ENCODE measurements at regions of chr3 and their contacts with region 1.

Region 1: GRCh38 chr3:10192953-10193691 is 28.4 kb downstream of the IRAK2 start:
- DNase-seq: peak; percentile 41 to 55
- ATAC-seq: peak in 1 of 2 donors; percentile 12
- H3K4me3 ChIP-seq: no peak overlapping the region
- H3K27ac ChIP-seq: peak overlapping the region; percentile 91 to 99 (median 96)
- H3K4me1 ChIP-seq: peaks cover 75 to 89% of the 10 kb centered on the region in 2 donors
- H3K27me3 ChIP-seq: no peaks in the 10 kb centered on the region
- CTCF ChIP-seq: peak in 3 of 5 experiments; percentile 25 to 40 (median 35)
- POLR2A ChIP-seq: no peak

Region 2: DNA sequence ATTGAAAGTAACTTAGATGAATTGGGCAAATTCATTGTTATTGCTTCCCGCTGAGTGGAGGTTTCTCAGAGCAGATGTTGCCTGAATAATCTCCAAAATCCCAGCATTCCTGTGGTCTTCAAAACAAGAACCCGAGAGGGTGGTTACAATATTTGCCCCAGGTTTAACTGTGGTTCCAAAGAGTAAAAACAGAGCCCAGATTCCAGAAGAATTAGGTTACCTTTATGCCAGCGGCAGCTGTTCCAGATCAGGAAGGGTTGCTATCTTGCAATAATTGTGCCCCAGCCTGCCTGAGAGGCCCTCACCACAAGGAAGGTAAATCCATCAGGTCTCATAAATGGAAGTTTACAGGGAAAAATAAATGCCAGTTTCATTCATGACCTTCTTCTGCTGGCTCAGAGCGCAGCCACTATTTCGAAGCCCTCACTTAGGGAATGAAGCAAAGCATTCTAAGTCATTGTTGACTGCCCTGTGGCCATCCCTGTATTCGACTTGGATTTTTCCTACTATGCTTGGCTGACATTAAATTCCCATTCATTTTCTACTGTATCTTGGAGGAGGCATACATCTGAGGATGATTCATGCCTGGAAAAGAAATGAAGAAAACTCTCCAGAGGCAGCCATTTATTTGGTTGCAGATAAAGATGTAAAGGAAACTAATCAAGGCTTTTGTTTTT is 1603.1 kb before region 1 on chr3:
- in situ Hi-C with region 1: no loop called
- intact Hi-C with region 1: loop called (anchors 10 kb)
- DNase-seq: no peak
- ATAC-seq: no peak
- H3K4me3 ChIP-seq: no peak overlapping the region
- H3K27ac ChIP-seq: peak overlapping the region; percentile 86 to 94 (median 88)
- H3K4me1 ChIP-seq: peaks cover 62 to 65% of the 10 kb centered on the region in 2 donors
- H3K27me3 ChIP-seq: no peaks in the 10 kb centered on the region
- CTCF ChIP-seq: no peak
- POLR2A ChIP-seq: no peak

Region 3: GRCh38 chr3:9976721-9977709 is 216.1 kb before region 1 on chr3:
- in situ Hi-C with region 1: no loop called
- intact Hi-C with region 1: loop called (anchors 5 kb)
- DNase-seq: peak; percentile 83 to 93
- ATAC-seq: peak; percentile 98 to 99
- H3K4me3 ChIP-seq: peak overlapping the region; percentile 23 to 56 (median 50)
- H3K27ac ChIP-seq: peak overlapping the region; percentile 89 to 96 (median 90)
- H3K4me1 ChIP-seq: peaks cover 36 to 54% of the 10 kb centered on the region in 2 donors
- H3K27me3 ChIP-seq: no peaks in the 10 kb centered on the region
- CTCF ChIP-seq: no peak
- POLR2A ChIP-seq: peak; percentile 36 to 37

Region 4: DNA sequence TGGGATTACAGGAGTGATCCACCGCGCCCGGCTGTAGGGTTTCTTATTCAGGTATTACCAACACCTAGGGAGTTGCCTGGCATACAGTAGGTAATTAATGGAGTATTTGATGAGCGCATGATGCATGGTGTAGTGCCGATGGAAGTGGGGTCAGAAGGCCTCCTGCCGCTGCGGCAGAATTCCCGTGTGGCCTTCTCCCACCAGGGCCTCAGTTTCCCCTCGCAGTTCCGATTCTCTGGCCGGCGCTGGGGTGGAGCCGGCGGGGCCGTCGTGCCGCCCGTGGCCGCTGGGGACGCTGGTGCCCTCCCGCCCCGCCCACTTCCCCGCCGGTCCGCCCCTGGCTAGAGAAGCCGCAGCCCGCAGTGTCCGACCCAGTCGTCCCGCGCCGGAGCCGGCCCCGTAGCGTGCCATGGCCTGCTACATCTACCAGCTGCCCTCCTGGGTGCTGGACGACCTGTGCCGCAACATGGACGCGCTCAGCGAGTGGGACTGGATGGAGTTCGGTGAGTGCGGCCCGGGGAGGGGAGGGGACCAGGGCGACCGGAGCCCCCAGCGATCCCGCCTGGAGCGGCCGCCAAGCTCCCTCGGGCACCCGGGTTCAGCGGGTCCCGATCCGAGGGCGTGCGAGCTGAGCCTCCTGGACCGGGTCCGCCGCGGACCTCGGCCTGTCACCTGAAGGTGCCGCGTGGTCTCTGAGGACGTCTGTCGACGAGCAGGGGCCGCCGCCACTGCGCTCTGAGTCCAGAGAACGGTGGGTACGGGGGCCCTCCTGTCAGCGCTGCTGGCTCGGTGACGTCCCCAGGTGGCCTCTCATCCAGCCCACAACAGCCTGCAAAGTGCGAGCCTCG is 28.4 kb before region 1 on chr3 and contains the start of gene IRAK2:
- in situ Hi-C with region 1: no loop called
- intact Hi-C with region 1: loop called (anchors 2 kb)
- DNase-seq: peak; percentile 61 to 69
- ATAC-seq: peak; percentile 90 to 91
- H3K4me3 ChIP-seq: peak within 1 kb of the TSS; percentile 87 to 100 (median 90)
- H3K27ac ChIP-seq: peak within 1 kb of the TSS; percentile 80 to 95 (median 88)
- H3K4me1 ChIP-seq: peaks cover 3 to 6% of the 10 kb centered on the region in 2 donors
- H3K27me3 ChIP-seq: no peaks in the 10 kb centered on the region
- CTCF ChIP-seq: peak; percentile 86 to 99 (median 90)
- POLR2A ChIP-seq: peak; percentile 67 to 79
- total RNA-seq, gene IRAK2: 21.9 to 42.0 (median 25.8) TPM

Region 5: GRCh38 chr3:10224784-10225665 is 31.9 kb after region 1 on chr3:
- in situ Hi-C with region 1: no loop called
- intact Hi-C with region 1: loop called (anchors 1 kb)
- DNase-seq: peak; percentile 66 to 81
- ATAC-seq: peak; percentile 89 to 95
- H3K4me3 ChIP-seq: no peak overlapping the region
- H3K27ac ChIP-seq: peak overlapping the region in 3 of 4 donors; percentile 11 to 64 (median 45)
- H3K4me1 ChIP-seq: peaks cover 0 to 5% of the 10 kb centered on the region in 2 donors
- H3K27me3 ChIP-seq: no peaks in the 10 kb centered on the region
- CTCF ChIP-seq: peak; percentile 77 to 90 (median 85)
- POLR2A ChIP-seq: no peak

Region 6: GRCh38 chr3:10248184-10249080 is 55.3 kb after region 1 on chr3 and contains the start of gene TATDN2:
- in situ Hi-C with region 1: no loop called
- intact Hi-C with region 1: loop called (anchors 2 kb)
- DNase-seq: peak; percentile 97
- ATAC-seq: peak; percentile 95
- H3K4me3 ChIP-seq: peak within 1 kb of the TSS; percentile 60 to 92 (median 81)
- H3K27ac ChIP-seq: peak within 1 kb of the TSS; percentile 77 to 96 (median 84)
- H3K4me1 ChIP-seq: peaks cover 24% of the 10 kb centered on the region in 2 donors
- H3K27me3 ChIP-seq: no peaks in the 10 kb centered on the region
- CTCF ChIP-seq: no peak
- POLR2A ChIP-seq: peak; percentile 93
- total RNA-seq, gene TATDN2: 10.9 to 11.5 (median 10.9) TPM